Naive thymus-derived CD8-positive, alpha-beta T cell (primary cell): ENCODE measurements at regions of chr10 and their contacts with region 1.

Region 1: GRCh38 chr10:24724381-24725228 is 918 bp upstream of the ARHGAP21 start:
- DNase-seq: peak; percentile 90 to 97 (median 94)
- ATAC-seq: peak; percentile 86 to 88
- H3K4me3 Mint-ChIP-seq: peak overlapping the region; percentile 86 to 96 (median 92)
- H3K27ac Mint-ChIP-seq: peak overlapping the region; percentile 61 to 95 (median 93)
- H3K4me1 Mint-ChIP-seq: peaks cover 5 to 27% (median 17%) of the 10 kb centered on the region in 4 donors
- H3K27me3 Mint-ChIP-seq: no peaks in the 10 kb centered on the region

Region 2: DNA sequence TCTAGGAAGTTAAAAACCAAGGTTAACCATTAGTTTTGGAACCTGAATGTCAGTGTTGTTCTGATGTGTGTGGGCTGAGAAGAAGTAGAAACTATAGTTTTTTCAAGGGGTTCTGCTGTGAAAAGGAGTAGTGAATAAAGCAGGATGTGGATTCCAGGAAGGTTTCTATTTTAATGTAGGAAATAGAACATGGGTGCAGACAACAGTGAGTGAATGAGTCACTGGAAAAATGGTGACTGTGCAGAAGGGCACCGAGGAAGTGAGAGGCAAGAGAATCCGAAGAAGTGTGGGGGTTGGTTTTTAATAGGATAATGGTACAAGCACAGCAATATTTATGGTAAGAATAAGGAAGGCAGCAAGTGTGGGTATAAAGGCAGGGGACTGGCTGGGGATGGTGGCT is 121.3 kb before region 1 on chr10:
- POLR2A ChIA-PET with region 1: no interaction called
- DNase-seq: no peak
- ATAC-seq: no peak
- H3K4me3 Mint-ChIP-seq: no peak overlapping the region
- H3K27ac Mint-ChIP-seq: peak overlapping the region in 2 of 10 donors; percentile 12 to 53
- H3K4me1 Mint-ChIP-seq: peaks cover 0 to 8% (median 2%) of the 10 kb centered on the region in 4 donors
- H3K27me3 Mint-ChIP-seq: no peaks in the 10 kb centered on the region

Region 3: DNA sequence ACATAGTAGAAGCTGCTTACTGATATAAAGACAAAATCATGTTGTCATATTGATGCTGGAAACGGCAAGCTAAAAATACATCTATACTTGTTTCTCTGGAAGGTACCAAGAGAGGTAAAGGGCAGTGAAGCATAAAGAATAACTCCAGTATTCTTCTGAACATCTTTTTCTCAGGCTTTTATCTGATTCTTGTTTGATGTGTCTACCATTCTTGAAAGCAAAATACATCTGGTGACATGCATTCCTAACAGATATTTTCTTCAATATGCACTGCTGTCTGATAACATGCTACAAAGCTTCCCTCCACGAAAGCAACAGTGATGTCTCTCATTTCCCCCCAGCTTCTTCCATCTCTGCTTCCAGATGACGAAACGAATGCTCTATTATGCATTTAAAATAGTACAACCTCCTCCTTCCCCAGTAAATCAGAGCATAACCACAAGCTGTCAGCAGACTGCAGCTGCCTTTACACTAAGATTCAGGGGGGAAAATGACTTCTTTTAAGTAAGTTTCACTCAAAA is 101.8 kb before region 1 on chr10:
- POLR2A ChIA-PET with region 1: interaction called, 15 read pairs
- DNase-seq: peak in 7 of 10 donors; percentile 15 to 83 (median 57)
- ATAC-seq: peak; percentile 70 to 73
- H3K4me3 Mint-ChIP-seq: peak overlapping the region; percentile 68 to 82 (median 74)
- H3K27ac Mint-ChIP-seq: peak overlapping the region; percentile 51 to 97 (median 94)
- H3K4me1 Mint-ChIP-seq: peaks cover 12 to 47% (median 36%) of the 10 kb centered on the region in 4 donors
- H3K27me3 Mint-ChIP-seq: no peaks in the 10 kb centered on the region

Region 4: DNA sequence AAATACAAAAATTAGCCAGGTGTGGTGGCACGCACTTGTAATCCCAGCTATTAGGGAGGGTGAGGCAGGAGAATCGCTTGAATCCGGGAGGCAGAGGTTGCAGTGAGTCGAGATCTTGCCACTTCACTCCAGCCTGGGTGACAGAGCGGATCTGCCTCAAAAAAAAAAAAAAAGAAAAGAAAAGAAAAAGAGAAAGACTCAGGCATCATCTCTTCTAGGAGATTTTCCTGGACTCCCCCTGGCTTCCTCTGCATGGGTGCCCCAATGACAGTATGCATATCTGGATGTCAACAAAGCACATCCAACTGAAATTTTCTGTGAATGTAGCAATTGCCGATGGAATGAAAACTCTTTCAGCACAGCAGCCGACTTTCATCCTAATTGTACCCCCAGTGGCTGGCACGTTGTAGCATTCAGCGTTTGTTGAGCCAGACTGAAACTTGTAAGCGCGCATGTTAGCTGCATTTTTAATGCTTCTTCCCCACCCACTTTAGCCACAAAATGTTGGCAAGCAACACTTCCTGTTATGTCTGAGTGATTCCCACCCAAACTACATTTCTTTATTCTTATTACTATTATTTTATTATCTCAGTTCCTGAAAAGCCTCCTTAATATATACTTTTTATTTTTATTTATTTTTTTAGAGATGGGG is 157.6 kb after region 1 on chr10:
- POLR2A ChIA-PET with region 1: interaction called, 30 read pairs
- DNase-seq: peak in 9 of 10 donors; percentile 22 to 80 (median 60)
- ATAC-seq: peak; percentile 85 to 90
- H3K4me3 Mint-ChIP-seq: peak overlapping the region; percentile 70 to 90 (median 82)
- H3K27ac Mint-ChIP-seq: peak overlapping the region; percentile 88 to 99 (median 96)
- H3K4me1 Mint-ChIP-seq: peaks cover 13 to 67% (median 65%) of the 10 kb centered on the region in 4 donors
- H3K27me3 Mint-ChIP-seq: no peaks in the 10 kb centered on the region

Region 5: DNA sequence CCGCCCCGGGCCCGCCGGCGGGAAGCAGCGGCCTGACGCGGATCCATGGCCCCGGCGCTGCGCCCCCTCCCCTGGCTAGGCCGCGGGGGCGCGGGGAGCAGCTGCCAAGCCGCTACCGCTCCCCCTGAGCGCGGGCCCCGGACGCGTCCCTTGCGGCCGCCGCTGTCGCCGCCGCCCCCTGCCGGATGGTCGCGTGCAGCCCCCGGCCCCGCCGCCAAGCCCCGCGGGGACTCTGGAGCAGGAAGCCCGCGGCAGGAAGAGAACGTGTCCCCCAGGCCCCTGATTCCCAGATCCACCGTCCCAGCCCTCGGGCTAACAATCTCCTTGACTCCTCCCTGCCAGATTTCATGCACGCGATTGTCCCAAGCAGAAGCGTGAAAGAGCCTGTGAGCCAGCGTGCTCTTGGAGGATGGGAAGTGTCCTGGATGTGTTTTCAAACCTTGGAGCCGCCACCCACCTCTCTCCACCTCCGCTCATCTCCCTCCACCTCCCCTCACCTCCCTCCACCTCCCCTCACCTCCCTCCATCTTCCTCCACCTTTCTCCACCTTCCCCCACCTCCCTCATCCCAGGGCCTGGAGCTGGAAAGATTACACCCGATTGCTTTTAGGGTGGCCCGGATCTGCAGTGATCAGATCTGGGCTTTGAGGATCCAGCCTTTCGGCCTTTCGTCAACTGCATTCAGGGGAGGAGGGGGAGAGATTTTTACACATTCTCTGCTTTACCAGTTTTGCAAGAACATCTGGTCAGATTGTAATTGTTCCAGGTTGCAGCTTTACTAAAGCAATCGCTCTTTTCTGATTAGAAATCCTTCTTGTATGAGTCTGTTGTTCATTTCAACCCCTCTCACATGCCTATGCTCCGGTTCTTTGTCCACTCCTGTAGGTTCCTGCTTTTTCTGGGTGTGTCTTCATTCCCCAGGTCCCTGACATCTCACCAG is 228.4 kb after region 1 on chr10:
- POLR2A ChIA-PET with region 1: interaction called, 16 read pairs
- DNase-seq: peak; percentile 29 to 74 (median 62)
- ATAC-seq: peak; percentile 84 to 91
- H3K4me3 Mint-ChIP-seq: peak overlapping the region; percentile 79 to 90 (median 82)
- H3K27ac Mint-ChIP-seq: peak overlapping the region; percentile 73 to 95 (median 87)
- H3K4me1 Mint-ChIP-seq: peaks cover 14 to 24% (median 19%) of the 10 kb centered on the region in 4 donors
- H3K27me3 Mint-ChIP-seq: peaks cover 0 to 4% (median 0%) of the 10 kb centered on the region in 5 donors